CD4-positive, alpha-beta T cell (primary cell): ENCODE measurements at regions of chr12 and their contacts with region 1.

Region 1: GRCh38 chr12:1117970-1118563 is 127.0 kb downstream of the ERC1 start:
- DNase-seq: peak; percentile 53 to 89 (median 64)
- ATAC-seq: peak; percentile 57
- H3K4me3 ChIP-seq: no peak overlapping the region
- H3K4me3 Mint-ChIP-seq: no peak overlapping the region
- H3K27ac ChIP-seq: no peak overlapping the region
- H3K27ac Mint-ChIP-seq: no peak overlapping the region
- H3K4me1 ChIP-seq: peaks cover 4% of the 10 kb centered on the region
- H3K4me1 Mint-ChIP-seq: peaks cover 20% of the 10 kb centered on the region
- H3K27me3 ChIP-seq: no peaks in the 10 kb centered on the region
- H3K27me3 Mint-ChIP-seq: no peaks in the 10 kb centered on the region
- CTCF ChIP-seq: peak; percentile 95

Region 2: GRCh38 chr12:1093166-1093751 is 24.8 kb before region 1 on chr12:
- CTCF ChIA-PET with region 1: no interaction called
- POLR2A ChIA-PET with region 1: no interaction called
- intact Hi-C with region 1: no loop called
- DNase-seq: peak in 8 of 14 experiments; percentile 3 to 68 (median 28)
- ATAC-seq: peak; percentile 77
- H3K4me3 ChIP-seq: no peak overlapping the region
- H3K4me3 Mint-ChIP-seq: no peak overlapping the region
- H3K27ac ChIP-seq: no peak overlapping the region
- H3K27ac Mint-ChIP-seq: no peak overlapping the region
- H3K4me1 ChIP-seq: no peaks in the 10 kb centered on the region
- H3K4me1 Mint-ChIP-seq: peaks cover 16% of the 10 kb centered on the region
- H3K27me3 ChIP-seq: no peaks in the 10 kb centered on the region
- H3K27me3 Mint-ChIP-seq: no peaks in the 10 kb centered on the region
- CTCF ChIP-seq: peak; percentile 71

Region 3: GRCh38 chr12:1104088-1104800 is 13.8 kb before region 1 on chr12:
- CTCF ChIA-PET with region 1: interaction called, 12 read pairs
- POLR2A ChIA-PET with region 1: no interaction called
- intact Hi-C with region 1: no loop called
- DNase-seq: peak in 2 of 14 experiments; percentile 6 to 8
- ATAC-seq: peak; percentile 85
- H3K4me3 ChIP-seq: no peak overlapping the region
- H3K4me3 Mint-ChIP-seq: no peak overlapping the region
- H3K27ac ChIP-seq: no peak overlapping the region
- H3K27ac Mint-ChIP-seq: peak overlapping the region; percentile 50
- H3K4me1 ChIP-seq: no peaks in the 10 kb centered on the region
- H3K4me1 Mint-ChIP-seq: peaks cover 46% of the 10 kb centered on the region
- H3K27me3 ChIP-seq: no peaks in the 10 kb centered on the region
- H3K27me3 Mint-ChIP-seq: no peaks in the 10 kb centered on the region
- CTCF ChIP-seq: no peak

Region 4: GRCh38 chr12:1204581-1205121 is 86.6 kb after region 1 on chr12:
- CTCF ChIA-PET with region 1: interaction called, 4 read pairs
- POLR2A ChIA-PET with region 1: interaction called, 4 read pairs
- intact Hi-C with region 1: loop called in 1 of 2 experiments (anchors 10 kb)
- DNase-seq: peak in 4 of 14 experiments; percentile 6 to 66 (median 44)
- ATAC-seq: peak; percentile 92
- H3K4me3 ChIP-seq: peak overlapping the region; percentile 62
- H3K4me3 Mint-ChIP-seq: no peak overlapping the region
- H3K27ac ChIP-seq: peak overlapping the region; percentile 70 to 84
- H3K27ac Mint-ChIP-seq: no peak overlapping the region
- H3K4me1 ChIP-seq: no peaks in the 10 kb centered on the region
- H3K4me1 Mint-ChIP-seq: peaks cover 21% of the 10 kb centered on the region
- H3K27me3 ChIP-seq: no peaks in the 10 kb centered on the region
- H3K27me3 Mint-ChIP-seq: no peaks in the 10 kb centered on the region
- CTCF ChIP-seq: no peak

Region 5: DNA sequence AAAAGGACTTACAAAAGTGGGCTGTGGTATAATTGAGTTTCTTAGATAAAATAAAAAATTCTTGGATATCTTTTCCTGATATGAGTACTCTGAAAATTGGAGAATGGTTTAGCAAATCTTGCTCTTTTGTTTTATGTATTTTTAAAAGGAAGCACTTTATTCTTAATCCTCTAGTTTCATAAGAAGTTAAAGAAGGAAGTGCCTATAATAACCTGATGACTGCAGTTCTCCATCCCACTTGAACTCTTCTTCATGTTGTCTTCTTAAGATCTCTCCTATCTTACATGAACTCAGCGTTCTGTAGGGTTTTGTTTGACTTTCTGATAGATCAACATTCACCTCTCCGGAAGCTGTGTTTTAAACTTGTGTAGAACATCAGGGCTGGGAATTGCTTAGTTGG is 143.9 kb after region 1 on chr12:
- CTCF ChIA-PET with region 1: no interaction called
- POLR2A ChIA-PET with region 1: no interaction called
- intact Hi-C with region 1: no loop called
- DNase-seq: no peak
- ATAC-seq: no peak
- H3K4me3 ChIP-seq: no peak overlapping the region
- H3K4me3 Mint-ChIP-seq: no peak overlapping the region
- H3K27ac ChIP-seq: no peak overlapping the region
- H3K27ac Mint-ChIP-seq: no peak overlapping the region
- H3K4me1 ChIP-seq: no peaks in the 10 kb centered on the region
- H3K4me1 Mint-ChIP-seq: peaks cover 6% of the 10 kb centered on the region
- H3K27me3 ChIP-seq: no peaks in the 10 kb centered on the region
- H3K27me3 Mint-ChIP-seq: no peaks in the 10 kb centered on the region
- CTCF ChIP-seq: no peak

Region 6: DNA sequence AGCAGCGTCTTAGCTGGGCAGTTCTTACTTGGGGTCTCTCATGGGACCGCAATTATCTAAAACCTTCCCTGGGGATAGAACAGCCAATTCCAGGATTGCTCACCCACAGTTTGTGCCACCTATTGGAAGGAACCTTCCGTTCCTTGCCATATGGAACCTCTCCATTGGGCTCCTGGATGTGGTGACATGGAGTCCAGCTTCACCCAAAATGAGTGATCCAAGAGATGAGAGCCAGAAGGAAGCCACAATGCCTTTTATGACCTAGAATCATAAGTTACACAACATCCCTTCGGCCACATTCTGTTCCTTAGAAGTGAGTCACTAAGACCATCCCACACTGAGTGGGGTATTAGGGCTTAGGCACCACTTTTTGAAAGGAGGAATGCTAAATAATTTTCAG is 311.9 kb after region 1 on chr12:
- CTCF ChIA-PET with region 1: no interaction called
- POLR2A ChIA-PET with region 1: no interaction called
- intact Hi-C with region 1: no loop called
- DNase-seq: no peak
- ATAC-seq: no peak
- H3K4me3 ChIP-seq: no peak overlapping the region
- H3K4me3 Mint-ChIP-seq: no peak overlapping the region
- H3K27ac ChIP-seq: no peak overlapping the region
- H3K27ac Mint-ChIP-seq: no peak overlapping the region
- H3K4me1 ChIP-seq: no peaks in the 10 kb centered on the region
- H3K4me1 Mint-ChIP-seq: no peaks in the 10 kb centered on the region
- H3K27me3 ChIP-seq: no peaks in the 10 kb centered on the region
- H3K27me3 Mint-ChIP-seq: no peaks in the 10 kb centered on the region
- CTCF ChIP-seq: no peak

Region 7: DNA sequence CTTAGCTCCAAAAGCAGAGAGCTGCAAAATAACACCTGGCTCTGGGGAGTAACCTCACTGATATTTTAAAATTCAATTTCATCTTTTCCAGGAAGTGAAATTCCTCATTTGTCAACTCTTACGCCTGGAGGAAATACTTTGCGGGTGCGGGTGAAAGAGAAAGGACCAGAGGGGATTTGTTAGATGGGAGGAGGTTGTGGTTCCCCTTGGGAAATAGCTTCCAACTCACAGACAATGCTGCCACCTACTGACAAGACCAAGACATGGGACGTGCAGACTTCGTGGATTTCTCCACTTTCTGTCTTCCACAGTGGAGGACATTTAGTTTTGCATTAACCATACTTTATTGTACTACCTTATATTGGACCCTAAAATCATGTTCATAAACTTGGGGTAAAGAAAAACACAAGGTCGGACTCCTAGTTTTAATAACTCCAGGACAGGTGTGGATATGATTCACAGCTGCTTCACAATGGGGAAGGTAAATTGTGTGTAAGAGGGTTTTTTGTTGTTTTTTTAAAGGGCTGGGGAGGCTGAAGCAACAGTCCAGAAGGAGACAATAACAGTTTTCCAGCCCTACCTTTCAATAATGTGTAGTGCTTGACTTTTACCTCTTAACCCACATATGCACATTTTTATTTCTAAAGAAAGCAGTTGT is 465.5 kb after region 1 on chr12:
- CTCF ChIA-PET with region 1: interaction called, 70 read pairs
- POLR2A ChIA-PET with region 1: interaction called, 37 read pairs
- intact Hi-C with region 1: loop called (anchors 1 kb)
- DNase-seq: peak in 13 of 14 experiments; percentile 37 to 88 (median 53)
- ATAC-seq: peak; percentile 74
- H3K4me3 ChIP-seq: no peak overlapping the region
- H3K4me3 Mint-ChIP-seq: peak overlapping the region; percentile 2
- H3K27ac ChIP-seq: no peak overlapping the region
- H3K27ac Mint-ChIP-seq: peak overlapping the region; percentile 16
- H3K4me1 ChIP-seq: peaks cover 5% of the 10 kb centered on the region
- H3K4me1 Mint-ChIP-seq: peaks cover 26% of the 10 kb centered on the region
- H3K27me3 ChIP-seq: no peaks in the 10 kb centered on the region
- H3K27me3 Mint-ChIP-seq: no peaks in the 10 kb centered on the region
- CTCF ChIP-seq: peak; percentile 96

Region 8: DNA sequence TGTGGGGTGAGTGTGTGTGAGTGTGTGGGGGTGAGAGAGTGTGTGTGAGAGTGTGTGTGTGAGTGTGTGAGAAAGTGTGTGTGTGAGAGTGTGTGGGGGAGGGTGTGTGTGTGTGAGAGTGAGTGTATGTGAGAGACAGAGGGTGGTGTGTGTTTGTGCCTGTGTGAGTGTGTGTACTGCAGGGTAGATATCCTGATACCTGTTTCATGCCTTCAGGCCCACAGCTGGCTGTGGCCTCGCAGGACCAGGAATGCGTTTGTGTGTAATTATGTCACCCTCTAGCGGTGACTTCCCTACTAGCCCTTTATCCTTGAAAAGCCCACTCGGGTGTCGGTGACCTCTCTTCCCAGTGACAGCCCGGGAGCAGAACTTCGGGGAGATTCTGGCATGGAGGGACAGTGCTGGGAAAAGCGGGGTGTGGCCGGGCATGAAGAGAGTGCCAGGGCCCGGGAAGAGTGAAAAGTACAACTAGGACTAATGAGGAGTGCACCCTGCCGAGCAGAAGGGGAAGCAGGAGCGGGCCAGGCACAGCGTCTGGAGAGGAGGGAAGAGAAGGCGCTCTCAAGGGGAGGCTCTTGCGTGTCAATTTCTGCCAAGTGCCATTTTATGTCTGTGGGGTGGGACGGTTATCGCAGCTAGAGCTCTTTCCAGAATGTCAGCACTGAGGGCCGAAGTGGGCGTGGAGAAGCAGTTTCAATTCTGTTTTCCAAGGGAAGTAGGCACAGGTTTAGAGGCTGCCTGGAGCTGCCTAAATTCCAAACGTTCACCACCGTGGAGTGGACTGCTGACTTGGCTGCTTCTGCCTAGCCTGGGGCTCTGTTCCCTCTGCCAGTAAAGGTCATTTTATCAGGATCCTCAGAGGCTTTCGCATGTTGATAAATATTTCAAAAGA is 487.3 kb after region 1 on chr12:
- CTCF ChIA-PET with region 1: interaction called, 13 read pairs
- POLR2A ChIA-PET with region 1: interaction called, 28 read pairs
- intact Hi-C with region 1: loop called (anchors 1 kb)
- DNase-seq: peak; percentile 37 to 87 (median 50)
- ATAC-seq: peak; percentile 69
- H3K4me3 ChIP-seq: peak overlapping the region; percentile 51
- H3K4me3 Mint-ChIP-seq: peak overlapping the region; percentile 79
- H3K27ac ChIP-seq: no peak overlapping the region
- H3K27ac Mint-ChIP-seq: peak overlapping the region; percentile 10
- H3K4me1 ChIP-seq: peaks cover 26% of the 10 kb centered on the region
- H3K4me1 Mint-ChIP-seq: peaks cover 39% of the 10 kb centered on the region
- H3K27me3 ChIP-seq: no peaks in the 10 kb centered on the region
- H3K27me3 Mint-ChIP-seq: no peaks in the 10 kb centered on the region
- CTCF ChIP-seq: peak; percentile 77